Upper lobe of right lung (tissue), 1 donor: ENCODE measurements at regions of chrX and their contacts with region 1.

Region 1: GRCh38 chrX:70970482-70970995 is 39.6 kb upstream of the SLC7A3 start:
- DNase-seq: no peak
- ATAC-seq: no peak
- H3K4me3 ChIP-seq: no peak overlapping the region
- H3K27ac ChIP-seq: no peak overlapping the region
- H3K4me1 ChIP-seq: no peaks in the 10 kb centered on the region
- H3K27me3 ChIP-seq: no peaks in the 10 kb centered on the region
- CTCF ChIP-seq: peak; percentile 21

Region 2: GRCh38 chrX:71178908-71179307 is 208.4 kb after region 1 on chrX:
- intact Hi-C with region 1: loop called (anchors 10 kb)
- DNase-seq: no peak
- ATAC-seq: peak; percentile 71
- H3K4me3 ChIP-seq: no peak overlapping the region
- H3K27ac ChIP-seq: no peak overlapping the region
- H3K4me1 ChIP-seq: peaks cover 5% of the 10 kb centered on the region
- H3K27me3 ChIP-seq: no peaks in the 10 kb centered on the region
- CTCF ChIP-seq: peak; percentile 64